PC-9 (cell line): ENCODE measurements at regions of chr11 and their contacts with region 1.

Region 1: DNA sequence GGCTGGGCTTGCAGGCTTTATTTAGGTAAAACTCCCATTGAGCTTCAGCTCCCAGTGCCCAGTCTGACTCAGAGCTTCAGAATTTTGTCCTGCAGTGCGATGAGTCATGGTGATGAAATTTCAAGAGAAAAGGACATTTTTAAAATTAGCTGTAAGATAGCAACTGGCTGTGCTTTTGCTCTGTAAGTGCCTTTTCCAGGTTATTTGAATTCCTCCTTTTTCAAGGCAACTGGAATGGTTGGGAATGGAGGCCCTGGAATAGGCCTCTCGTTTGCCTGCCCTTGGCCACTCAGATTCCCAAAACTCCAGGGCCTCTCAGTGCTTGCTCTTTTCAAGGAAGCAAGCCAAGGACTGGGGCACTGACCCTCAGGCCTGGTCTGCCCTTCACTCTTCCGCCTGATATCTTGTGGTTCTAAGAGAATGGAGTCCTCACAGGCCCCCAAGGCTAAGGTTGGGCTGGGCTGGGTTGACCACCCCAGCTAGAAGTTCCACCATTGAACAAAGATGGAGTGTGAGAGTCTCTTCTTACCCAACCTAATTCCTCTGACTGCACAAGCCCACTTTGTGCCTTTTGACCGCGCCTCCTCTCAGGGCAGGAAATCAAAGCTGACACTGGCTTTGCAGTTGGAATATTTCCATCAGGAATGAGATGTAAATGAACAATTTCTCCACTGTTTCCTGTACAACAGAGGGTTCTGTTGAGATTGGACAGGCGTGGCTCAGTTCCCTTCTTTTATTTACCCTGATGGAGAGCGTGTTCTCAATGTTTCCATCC is 59.4 kb upstream of the PRSS23 start:
- DNase-seq: peak; percentile 69 to 96
- H3K4me3 ChIP-seq: peak overlapping the region; percentile 7; the same call in 1 of the 2 replicates
- H3K27ac ChIP-seq: peak overlapping the region; percentile 97
- H3K4me1 ChIP-seq: peaks cover 98% of the 10 kb centered on the region
- H3K27me3 ChIP-seq: no peaks in the 10 kb centered on the region
- CTCF ChIP-seq: no peak

Region 2: DNA sequence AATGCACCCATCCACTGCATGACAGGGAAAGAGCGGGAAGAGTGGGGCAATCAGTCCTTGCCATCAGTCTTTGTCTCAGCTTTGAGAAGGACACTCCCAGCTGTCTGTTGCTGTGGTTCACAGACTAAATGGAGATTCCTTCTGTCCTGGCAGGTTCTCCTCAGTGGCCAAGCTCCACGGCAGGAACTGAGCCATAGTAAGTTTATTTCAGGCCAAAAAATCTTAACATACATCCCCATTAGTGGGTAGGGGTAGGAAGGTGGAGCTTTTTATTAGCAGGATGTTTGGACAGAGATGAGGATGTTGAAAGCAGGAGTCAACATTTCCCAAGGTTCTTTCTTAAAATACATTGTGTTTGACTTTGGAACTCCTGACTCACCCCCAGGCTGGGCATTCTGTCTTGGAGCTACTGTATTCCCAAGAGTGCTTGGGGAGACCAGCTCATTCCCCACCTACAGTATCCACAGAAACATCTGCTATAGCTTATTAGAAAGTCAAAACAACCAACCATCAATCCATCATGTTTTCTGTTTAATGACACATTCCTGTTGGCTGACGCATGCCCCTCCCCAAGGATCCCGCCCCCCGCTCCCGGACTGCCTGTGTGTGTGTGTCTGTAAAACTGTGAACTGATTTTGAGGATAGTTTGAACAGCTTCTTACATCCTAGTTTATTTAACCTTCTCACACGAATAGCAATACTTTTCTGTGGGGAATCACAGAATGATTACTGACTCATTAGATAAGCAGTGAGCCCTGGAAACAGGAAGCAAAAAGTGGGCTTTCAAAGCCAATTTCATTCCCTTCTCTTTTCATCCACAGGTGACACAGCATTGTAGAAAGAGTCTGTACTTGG is 256.7 kb before region 1 on chr11:
- CTCF ChIA-PET with region 1: no interaction called
- POLR2A ChIA-PET with region 1: interaction called, 6 read pairs
- intact Hi-C with region 1: loop called (anchors 1 kb)
- DNase-seq: peak; percentile 87 to 100
- H3K4me3 ChIP-seq: peak overlapping the region; percentile 4; the same call in 1 of the 2 replicates
- H3K27ac ChIP-seq: peak overlapping the region; percentile 97
- H3K4me1 ChIP-seq: peaks cover 50% of the 10 kb centered on the region
- H3K27me3 ChIP-seq: no peaks in the 10 kb centered on the region
- CTCF ChIP-seq: no peak

Region 3: DNA sequence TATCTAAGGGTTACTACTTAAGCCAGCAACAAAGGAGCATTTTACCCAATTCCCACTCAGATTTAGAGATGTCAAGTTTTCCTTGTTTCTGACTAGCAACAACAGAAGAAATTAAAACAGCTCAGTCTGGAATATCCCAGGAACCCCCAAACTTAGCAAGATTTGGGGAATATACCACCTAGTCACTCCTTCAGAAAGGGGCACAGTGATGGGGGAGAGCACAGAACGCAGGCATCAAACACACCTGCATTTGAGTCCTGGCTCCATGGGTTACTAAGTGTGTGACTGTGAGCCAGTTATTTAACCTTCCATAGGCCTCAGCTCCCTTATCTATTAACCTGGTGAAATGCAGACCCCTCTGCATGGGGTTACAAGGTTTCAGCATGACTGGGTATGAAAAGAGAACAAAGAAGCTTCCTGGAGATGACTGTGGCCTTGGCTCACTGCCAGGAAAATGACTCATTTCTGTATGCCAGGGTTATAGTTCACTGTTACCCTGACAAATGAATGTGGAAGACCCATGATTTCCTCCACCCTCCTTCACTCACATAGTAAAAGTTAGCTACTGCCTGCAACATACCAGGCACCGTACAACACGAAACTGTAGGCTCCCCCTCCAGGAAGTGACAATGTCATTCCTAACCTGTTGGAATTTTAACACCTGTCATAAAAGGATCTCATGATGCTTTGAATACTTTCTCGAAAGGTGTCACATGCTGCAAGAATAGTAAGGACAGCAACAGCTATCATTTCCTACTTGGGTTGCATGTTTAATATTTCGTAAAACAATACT is 148.0 kb before region 1 on chr11:
- CTCF ChIA-PET with region 1: interaction called, 3 read pairs
- POLR2A ChIA-PET with region 1: interaction called, 4 read pairs
- intact Hi-C with region 1: loop called (anchors 1 kb)
- DNase-seq: peak; percentile 91 to 100
- H3K4me3 ChIP-seq: no peak overlapping the region
- H3K27ac ChIP-seq: peak overlapping the region; percentile 97
- H3K4me1 ChIP-seq: peaks cover 66% of the 10 kb centered on the region
- H3K27me3 ChIP-seq: no peaks in the 10 kb centered on the region
- CTCF ChIP-seq: no peak

Region 4: DNA sequence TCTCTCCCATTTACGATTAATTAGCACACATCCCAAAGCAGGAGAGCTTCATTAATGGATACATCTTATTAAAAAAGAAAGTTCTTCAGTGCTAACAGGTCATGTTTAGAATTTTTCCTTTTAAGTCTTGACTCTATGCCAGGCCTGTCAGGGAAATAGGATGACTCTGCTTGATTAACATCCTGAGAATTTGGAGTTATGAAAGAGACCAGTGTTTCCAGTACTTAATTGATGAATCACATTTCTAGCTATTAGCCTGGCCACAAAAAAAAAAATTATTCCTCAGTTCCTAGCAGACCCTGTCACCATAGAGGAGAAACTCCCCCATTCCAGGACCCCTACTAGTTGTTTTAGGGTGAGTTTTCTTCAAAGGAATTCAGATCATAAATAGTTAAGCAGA is 44.9 kb before region 1 on chr11:
- CTCF ChIA-PET with region 1: interaction called, 3 read pairs
- POLR2A ChIA-PET with region 1: interaction called, 7 read pairs
- intact Hi-C with region 1: loop called (anchors 2 kb)
- DNase-seq: peak; percentile 16 to 96
- H3K4me3 ChIP-seq: 0 out of 2 replicates have a peak overlapping the region, but pooled peaks have one; percentile 4
- H3K27ac ChIP-seq: peak overlapping the region; percentile 72
- H3K4me1 ChIP-seq: peaks cover 71% of the 10 kb centered on the region
- H3K27me3 ChIP-seq: no peaks in the 10 kb centered on the region
- CTCF ChIP-seq: no peak

Region 5: GRCh38 chr11:86818466-86819192 is 77.7 kb after region 1 on chr11:
- CTCF ChIA-PET with region 1: no interaction called
- POLR2A ChIA-PET with region 1: interaction called, 3 read pairs
- intact Hi-C with region 1: loop called (anchors 1 kb)
- DNase-seq: peak in 1 of 2 experiments; percentile 77
- H3K4me3 ChIP-seq: no peak overlapping the region
- H3K27ac ChIP-seq: no peak overlapping the region
- H3K4me1 ChIP-seq: peaks cover 20% of the 10 kb centered on the region
- H3K27me3 ChIP-seq: no peaks in the 10 kb centered on the region
- CTCF ChIP-seq: peak; percentile 94